CD4-positive, alpha-beta memory T cell (primary cell): ENCODE measurements at regions of chr17 and their contacts with region 1.

Region 1: DNA sequence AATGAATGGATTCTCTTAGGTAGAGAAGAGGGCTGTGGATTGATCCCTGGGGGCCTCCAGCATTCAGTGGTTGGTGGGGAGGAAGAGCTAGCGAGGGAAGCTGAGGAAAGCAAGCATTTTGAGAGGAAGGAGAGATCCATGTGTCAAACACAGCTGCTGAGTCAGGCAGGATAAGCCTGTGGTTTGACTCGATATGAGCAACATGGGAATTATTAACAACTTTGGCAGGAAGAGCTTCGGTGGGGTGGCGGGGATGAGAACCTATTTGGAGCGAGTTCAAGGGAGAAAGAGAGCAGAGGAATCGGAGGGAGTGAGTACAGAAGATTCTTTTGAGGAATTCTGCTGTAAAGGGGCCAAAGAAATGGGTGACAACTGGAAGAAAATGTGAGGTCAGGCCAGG is 59.5 kb upstream of the CDC42EP4 start:
- DNase-seq: no peak
- H3K4me3 ChIP-seq: no peak overlapping the region
- H3K4me3 Mint-ChIP-seq: no peak overlapping the region
- H3K27ac ChIP-seq: no peak overlapping the region
- H3K27ac Mint-ChIP-seq: peak overlapping the region in 1 of 7 donors; percentile 28
- H3K4me1 ChIP-seq: no peaks in the 10 kb centered on the region
- H3K4me1 Mint-ChIP-seq: no peaks in the 10 kb centered on the region
- H3K27me3 ChIP-seq: no peaks in the 10 kb centered on the region
- H3K27me3 Mint-ChIP-seq: peaks cover 9 to 14% of the 10 kb centered on the region in 2 donors

Region 2: GRCh38 chr17:72715906-72716572 is 655.2 kb before region 1 on chr17:
- CTCF ChIA-PET with region 1: interaction called, 11 read pairs
- POLR2A ChIA-PET with region 1: no interaction called
- intact Hi-C with region 1: no loop called
- DNase-seq: no peak
- H3K4me3 ChIP-seq: no peak overlapping the region
- H3K4me3 Mint-ChIP-seq: no peak overlapping the region
- H3K27ac ChIP-seq: no peak overlapping the region
- H3K27ac Mint-ChIP-seq: no peak overlapping the region
- H3K4me1 ChIP-seq: peaks cover 19% of the 10 kb centered on the region
- H3K4me1 Mint-ChIP-seq: peaks cover 16 to 28% (median 23%) of the 10 kb centered on the region in 4 donors
- H3K27me3 ChIP-seq: no peaks in the 10 kb centered on the region
- H3K27me3 Mint-ChIP-seq: no peaks in the 10 kb centered on the region

Region 3: GRCh38 chr17:73192894-73193701 is 178.2 kb before region 1 on chr17 and contains the start of gene COG1:
- CTCF ChIA-PET with region 1: interaction called, 18 read pairs
- POLR2A ChIA-PET with region 1: no interaction called
- intact Hi-C with region 1: no loop called
- DNase-seq: peak; percentile 68 to 91 (median 76)
- H3K4me3 ChIP-seq: peak within 1 kb of the TSS; percentile 71 to 84
- H3K4me3 Mint-ChIP-seq: peak within 1 kb of the TSS; percentile 97 to 99 (median 98)
- H3K27ac ChIP-seq: peak within 1 kb of the TSS; percentile 81
- H3K27ac Mint-ChIP-seq: peak within 1 kb of the TSS; percentile 79 to 99 (median 98)
- H3K4me1 ChIP-seq: peaks cover 22% of the 10 kb centered on the region
- H3K4me1 Mint-ChIP-seq: peaks cover 21 to 45% (median 28%) of the 10 kb centered on the region in 4 donors
- H3K27me3 ChIP-seq: no peaks in the 10 kb centered on the region
- H3K27me3 Mint-ChIP-seq: no peaks in the 10 kb centered on the region
- total RNA-seq, gene COG1: 76.2 to 81.6 TPM

Region 4: GRCh38 chr17:73261617-73261951 is 109.7 kb before region 1 on chr17 and contains the start of gene CPSF4L:
- CTCF ChIA-PET with region 1: interaction called, 185 read pairs
- POLR2A ChIA-PET with region 1: no interaction called
- intact Hi-C with region 1: no loop called
- DNase-seq: no peak
- H3K4me3 ChIP-seq: no peak within 1 kb of the TSS
- H3K4me3 Mint-ChIP-seq: no peak within 1 kb of the TSS
- H3K27ac ChIP-seq: no peak within 1 kb of the TSS
- H3K27ac Mint-ChIP-seq: no peak within 1 kb of the TSS
- H3K4me1 ChIP-seq: no peaks in the 10 kb centered on the region
- H3K4me1 Mint-ChIP-seq: no peaks in the 10 kb centered on the region
- H3K27me3 ChIP-seq: no peaks in the 10 kb centered on the region
- H3K27me3 Mint-ChIP-seq: no peaks in the 10 kb centered on the region
- total RNA-seq, gene CPSF4L: not detected